H1 (cell line): ENCODE measurements at regions of chr11 and their contacts with region 1.

Region 1: DNA sequence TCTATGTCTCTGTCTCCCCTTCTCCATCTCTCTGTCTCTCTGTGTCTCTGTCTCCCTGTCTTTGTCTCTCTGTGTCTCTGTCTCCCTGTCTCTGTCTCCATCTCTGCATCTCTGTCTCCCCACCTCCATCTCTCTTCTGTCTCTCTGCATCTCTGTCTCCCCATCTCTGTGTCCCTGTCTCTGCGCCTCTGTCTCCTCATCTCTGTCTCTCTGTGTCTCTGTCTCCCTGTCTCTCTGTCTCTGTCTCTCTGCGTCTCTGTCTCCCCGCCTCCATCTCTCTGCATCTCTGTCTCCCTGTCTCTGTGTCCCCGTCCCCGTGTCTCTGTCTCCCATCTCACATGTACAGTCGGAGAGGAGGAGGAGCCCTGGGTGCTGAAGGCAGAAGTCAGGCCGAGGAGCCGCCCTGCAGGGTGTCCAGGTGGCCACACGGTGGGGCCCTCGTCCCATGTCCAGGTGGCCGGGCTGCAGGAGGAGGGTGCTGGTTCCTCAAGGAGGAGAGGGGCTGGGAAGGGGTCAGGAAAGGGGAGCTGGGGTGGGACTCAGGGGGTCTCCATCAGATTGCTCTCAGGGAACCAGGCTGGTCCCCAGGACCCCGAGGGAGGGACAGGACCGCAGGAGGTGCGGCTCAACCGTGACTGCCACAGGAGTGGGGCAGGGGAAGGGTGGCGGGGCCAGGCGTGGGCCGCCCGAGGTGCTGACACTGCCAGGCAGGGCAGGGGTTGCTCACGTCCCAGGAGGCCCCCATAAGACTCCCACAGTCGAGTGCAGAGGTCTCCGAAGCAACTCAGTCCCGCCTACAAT is 25.6 kb upstream of the TH start:
- DNase-seq: peak; percentile 41 to 88
- H3K4me3 ChIP-seq: no peak overlapping the region
- H3K27ac ChIP-seq: no peak overlapping the region
- H3K4me1 ChIP-seq: no peaks in the 10 kb centered on the region
- H3K27me3 ChIP-seq: no peaks in the 10 kb centered on the region; a peak in 1 of 7 replicates
- CTCF ChIP-seq: peak; percentile 88 to 99 (median 97)
- EP300 ChIP-seq: no peak
- POLR2A ChIP-seq: no peak
- RAD21 ChIP-seq: peak; percentile 96 to 99

Region 2: GRCh38 chr11:2173150-2173693 is 23.9 kb before region 1 on chr11:
- CTCF ChIA-PET with region 1: interaction called, 19 read pairs
- POLR2A ChIA-PET with region 1: no interaction called
- DNase-seq: peak in 1 of 2 experiments; percentile 79
- H3K4me3 ChIP-seq: no peak overlapping the region
- H3K27ac ChIP-seq: no peak overlapping the region
- H3K4me1 ChIP-seq: peaks cover 0 to 3% (median 1%) of the 10 kb centered on the region in 4 experiments; a peak in 1 of 7 replicates
- H3K27me3 ChIP-seq: no peaks in the 10 kb centered on the region
- CTCF ChIP-seq: peak in 2 of 3 experiments; percentile 58 to 82; a peak in 3 of 4 replicates
- EP300 ChIP-seq: no peak
- POLR2A ChIP-seq: no peak
- RAD21 ChIP-seq: peak; percentile 45 to 49; a peak in 3 of 4 replicates

Region 3: GRCh38 chr11:2186669-2187279 is 10.4 kb before region 1 on chr11:
- CTCF ChIA-PET with region 1: interaction called, 15 read pairs
- POLR2A ChIA-PET with region 1: no interaction called
- DNase-seq: peak in 1 of 2 experiments; percentile 69
- H3K4me3 ChIP-seq: no peak overlapping the region
- H3K27ac ChIP-seq: no peak overlapping the region
- H3K4me1 ChIP-seq: no peaks in the 10 kb centered on the region; a peak in 2 of 7 replicates
- H3K27me3 ChIP-seq: peaks cover 0 to 16% (median 5%) of the 10 kb centered on the region in 4 experiments; a peak in 2 of 7 replicates
- CTCF ChIP-seq: peak; percentile 66 to 75 (median 69)
- EP300 ChIP-seq: no peak
- POLR2A ChIP-seq: no peak
- RAD21 ChIP-seq: peak; percentile 62 to 77

Region 4: DNA sequence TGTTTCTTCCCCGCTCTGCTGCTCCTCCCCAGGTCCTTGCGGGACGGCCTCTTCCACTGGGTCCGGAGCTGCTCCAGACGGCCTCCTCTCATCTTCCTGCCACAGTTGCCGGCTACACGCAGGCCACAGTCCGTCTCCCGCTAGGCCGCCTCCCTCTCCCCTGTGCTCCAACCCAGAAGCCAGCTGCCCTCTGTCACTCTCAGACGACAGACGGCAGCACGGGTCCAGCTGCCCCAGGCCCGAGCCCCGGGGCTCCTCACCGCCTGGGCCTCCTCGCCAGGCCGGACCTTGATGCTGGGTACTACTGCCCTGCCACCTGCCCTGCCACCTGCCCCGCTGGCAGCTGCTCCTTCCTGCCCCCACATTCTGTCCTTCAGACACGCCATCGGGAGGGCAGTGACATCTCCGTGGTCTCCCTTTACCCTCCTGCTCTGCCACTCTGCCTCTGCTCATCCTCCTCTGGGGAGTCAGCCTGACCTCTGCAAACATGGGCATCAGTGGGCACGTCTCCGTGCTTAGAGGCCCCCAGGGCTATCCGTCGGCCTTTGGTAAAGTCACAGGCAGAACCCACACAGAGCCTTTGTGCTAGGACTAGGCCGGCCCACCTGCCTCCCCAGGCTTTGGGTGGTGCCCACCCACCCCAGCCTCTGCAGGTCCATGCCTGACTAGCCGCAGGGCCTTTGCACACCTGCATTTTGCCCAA is 17.5 kb after region 1 on chr11:
- CTCF ChIA-PET with region 1: interaction called, 30 read pairs
- POLR2A ChIA-PET with region 1: interaction called, 3 read pairs
- DNase-seq: no peak
- H3K4me3 ChIP-seq: no peak overlapping the region
- H3K27ac ChIP-seq: no peak overlapping the region
- H3K4me1 ChIP-seq: peaks cover 5 to 14% (median 12%) of the 10 kb centered on the region in 4 experiments
- H3K27me3 ChIP-seq: peaks cover 0 to 27% (median 6%) of the 10 kb centered on the region in 4 experiments; a peak in 4 of 7 replicates
- CTCF ChIP-seq: no peak
- EP300 ChIP-seq: no peak
- POLR2A ChIP-seq: no peak
- RAD21 ChIP-seq: no peak

Region 5: GRCh38 chr11:2290351-2290841 is 93.2 kb after region 1 on chr11:
- CTCF ChIA-PET with region 1: interaction called, 248 read pairs
- POLR2A ChIA-PET with region 1: no interaction called
- DNase-seq: peak in 1 of 2 experiments; percentile 45
- H3K4me3 ChIP-seq: no peak overlapping the region
- H3K27ac ChIP-seq: no peak overlapping the region
- H3K4me1 ChIP-seq: peaks cover 0 to 5% (median 3%) of the 10 kb centered on the region in 4 experiments; a peak in 2 of 7 replicates
- H3K27me3 ChIP-seq: peaks cover 0 to 10% (median 1%) of the 10 kb centered on the region in 4 experiments; a peak in 4 of 7 replicates
- CTCF ChIP-seq: no peak
- EP300 ChIP-seq: no peak
- POLR2A ChIP-seq: no peak
- RAD21 ChIP-seq: no peak

Region 6: GRCh38 chr11:2420502-2421225 is 223.5 kb after region 1 on chr11:
- CTCF ChIA-PET with region 1: interaction called, 50 read pairs
- POLR2A ChIA-PET with region 1: no interaction called
- DNase-seq: peak; percentile 65 to 85
- H3K4me3 ChIP-seq: no peak overlapping the region
- H3K27ac ChIP-seq: no peak overlapping the region
- H3K4me1 ChIP-seq: peaks cover 0 to 5% (median under 1%) of the 10 kb centered on the region in 4 experiments; a peak in 2 of 7 replicates
- H3K27me3 ChIP-seq: peaks cover 0 to 3% (median 0%) of the 10 kb centered on the region in 4 experiments; a peak in 2 of 7 replicates
- CTCF ChIP-seq: peak in 2 of 3 experiments; percentile 94 to 97; a peak in 3 of 4 replicates
- EP300 ChIP-seq: no peak
- POLR2A ChIP-seq: no peak
- RAD21 ChIP-seq: peak; percentile 92 to 95